ENCODE measurements at regions of chr2 and their contacts with region 1.

Region 1: GRCh38 chr2:64124571-64124970 is 19.6 kb downstream of the PELI1 start:
- DNase-seq: no peak
- H3K4me3 ChIP-seq: no peak overlapping the region
- H3K27ac ChIP-seq: no peak overlapping the region
- H3K4me1 ChIP-seq: peaks cover 16% of the 10 kb centered on the region
- H3K27me3 ChIP-seq: no peaks in the 10 kb centered on the region
- CTCF ChIP-seq: no peak

Region 2: GRCh38 chr2:63488118-63488713 is 636.4 kb before region 1 on chr2:
- CTCF ChIA-PET with region 1: no interaction called
- POLR2A ChIA-PET with region 1: no interaction called
- intact Hi-C with region 1: no loop called
- DNase-seq: peak; percentile 27
- H3K4me3 ChIP-seq: no peak overlapping the region
- H3K27ac ChIP-seq: no peak overlapping the region
- H3K4me1 ChIP-seq: no peaks in the 10 kb centered on the region
- H3K27me3 ChIP-seq: no peaks in the 10 kb centered on the region
- CTCF ChIP-seq: peak; percentile 83

Region 3: GRCh38 chr2:64114063-64114911 is 10.3 kb before region 1 on chr2:
- CTCF ChIA-PET with region 1: interaction called, 11 read pairs
- POLR2A ChIA-PET with region 1: no interaction called
- intact Hi-C with region 1: no loop called
- DNase-seq: no peak
- H3K4me3 ChIP-seq: no peak overlapping the region
- H3K27ac ChIP-seq: no peak overlapping the region
- H3K4me1 ChIP-seq: peaks cover 30% of the 10 kb centered on the region
- H3K27me3 ChIP-seq: no peaks in the 10 kb centered on the region
- CTCF ChIP-seq: no peak

Measured in A673 (cell line).